ENCODE measurements at regions of chr15 and their contacts with region 1.

Region 1: DNA sequence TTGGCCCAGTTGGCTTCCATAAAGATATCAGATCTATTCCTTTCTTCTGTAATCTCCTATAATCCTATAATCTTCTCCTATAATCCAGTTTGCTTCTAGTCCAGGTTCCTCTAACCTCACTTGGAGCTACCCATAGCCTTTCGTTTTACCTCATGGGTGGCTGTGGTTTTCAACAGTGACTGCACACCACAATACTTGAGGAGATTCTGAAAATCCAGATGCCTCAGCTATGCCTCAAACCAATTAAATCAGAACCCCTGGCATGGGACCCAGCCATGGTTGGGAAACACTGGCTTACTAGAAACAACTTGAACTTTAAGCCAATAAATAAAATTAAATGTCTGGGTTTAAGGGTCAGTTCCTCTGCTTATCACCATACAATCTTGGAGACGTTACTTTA is 86.1 kb upstream of the NTRK3 start:
- DNase-seq: no peak
- H3K4me3 ChIP-seq: no peak overlapping the region
- H3K27ac ChIP-seq: no peak overlapping the region
- H3K4me1 ChIP-seq: no peaks in the 10 kb centered on the region
- H3K27me3 ChIP-seq: no peaks in the 10 kb centered on the region
- CTCF ChIP-seq: no peak
- POLR2A ChIP-seq: no peak

Region 2: GRCh38 chr15:87394676-87395075 is 948.0 kb before region 1 on chr15:
- intact Hi-C with region 1: loop called (anchors 10 kb)
- DNase-seq: no peak
- H3K4me3 ChIP-seq: no peak overlapping the region
- H3K27ac ChIP-seq: no peak overlapping the region
- H3K4me1 ChIP-seq: no peaks in the 10 kb centered on the region
- H3K27me3 ChIP-seq: no peaks in the 10 kb centered on the region
- CTCF ChIP-seq: no peak
- POLR2A ChIP-seq: no peak

Measured in testis (tissue), 5 donors.